Mammary epithelial cell (primary cell): ENCODE measurements at regions of chr4 and their contacts with region 1.

Region 1: DNA sequence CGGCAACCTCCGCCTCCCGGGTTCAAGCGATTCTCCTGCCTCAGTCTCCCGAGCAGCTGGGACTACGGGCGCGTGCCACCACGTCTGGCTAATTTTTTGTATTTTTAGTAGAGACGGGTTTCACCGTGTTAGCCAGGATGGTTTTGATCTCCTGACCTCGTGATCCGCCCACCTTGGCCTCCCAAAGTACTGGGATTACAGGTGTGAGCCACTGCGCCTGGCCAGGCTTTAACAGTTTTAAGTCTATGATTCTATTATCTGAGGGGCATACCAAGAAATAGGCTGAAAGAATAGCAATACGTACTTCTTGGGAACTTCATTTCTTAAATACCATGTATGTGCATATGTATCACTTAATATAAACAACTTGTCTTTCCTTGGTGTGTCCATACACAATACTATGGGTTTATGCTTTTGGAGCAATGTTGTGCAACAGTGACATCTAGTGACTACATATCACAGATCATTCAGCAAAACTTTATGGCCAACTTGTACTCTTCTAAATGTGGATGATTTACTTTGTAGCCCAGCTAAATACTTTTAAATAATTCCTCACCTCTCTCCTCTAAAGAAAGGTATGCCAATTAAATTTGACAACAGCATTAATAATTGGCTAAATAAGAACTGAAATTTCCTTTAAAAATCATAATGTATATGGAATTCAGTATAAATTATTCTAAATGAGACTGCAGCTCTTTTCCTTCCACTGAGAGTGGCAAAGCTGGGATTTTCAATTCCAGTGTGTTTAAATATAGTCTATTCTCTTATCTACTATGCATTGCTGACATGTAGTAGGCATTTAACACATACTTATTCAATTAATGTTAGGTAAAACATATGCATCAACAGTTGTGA is 10.4 kb downstream of the SLC9B1 start:
- DNase-seq: peak; percentile 56
- H3K4me3 ChIP-seq: no peak overlapping the region
- H3K27ac ChIP-seq: no peak overlapping the region
- H3K4me1 ChIP-seq: peaks cover 15% of the 10 kb centered on the region
- H3K27me3 ChIP-seq: no peaks in the 10 kb centered on the region
- CTCF ChIP-seq: peak; percentile 74 to 75

Region 2: GRCh38 chr4:101933906-101934305 is 1075.2 kb before region 1 on chr4:
- CTCF ChIA-PET with region 1: interaction called, 10 read pairs
- dilution Hi-C with region 1: no loop called
- in situ Hi-C with region 1: no loop called
- intact Hi-C with region 1: no loop called
- DNase-seq: no peak
- H3K4me3 ChIP-seq: no peak overlapping the region
- H3K27ac ChIP-seq: no peak overlapping the region
- H3K4me1 ChIP-seq: no peaks in the 10 kb centered on the region
- H3K27me3 ChIP-seq: peaks cover 2% of the 10 kb centered on the region
- CTCF ChIP-seq: no peak

Region 3: DNA sequence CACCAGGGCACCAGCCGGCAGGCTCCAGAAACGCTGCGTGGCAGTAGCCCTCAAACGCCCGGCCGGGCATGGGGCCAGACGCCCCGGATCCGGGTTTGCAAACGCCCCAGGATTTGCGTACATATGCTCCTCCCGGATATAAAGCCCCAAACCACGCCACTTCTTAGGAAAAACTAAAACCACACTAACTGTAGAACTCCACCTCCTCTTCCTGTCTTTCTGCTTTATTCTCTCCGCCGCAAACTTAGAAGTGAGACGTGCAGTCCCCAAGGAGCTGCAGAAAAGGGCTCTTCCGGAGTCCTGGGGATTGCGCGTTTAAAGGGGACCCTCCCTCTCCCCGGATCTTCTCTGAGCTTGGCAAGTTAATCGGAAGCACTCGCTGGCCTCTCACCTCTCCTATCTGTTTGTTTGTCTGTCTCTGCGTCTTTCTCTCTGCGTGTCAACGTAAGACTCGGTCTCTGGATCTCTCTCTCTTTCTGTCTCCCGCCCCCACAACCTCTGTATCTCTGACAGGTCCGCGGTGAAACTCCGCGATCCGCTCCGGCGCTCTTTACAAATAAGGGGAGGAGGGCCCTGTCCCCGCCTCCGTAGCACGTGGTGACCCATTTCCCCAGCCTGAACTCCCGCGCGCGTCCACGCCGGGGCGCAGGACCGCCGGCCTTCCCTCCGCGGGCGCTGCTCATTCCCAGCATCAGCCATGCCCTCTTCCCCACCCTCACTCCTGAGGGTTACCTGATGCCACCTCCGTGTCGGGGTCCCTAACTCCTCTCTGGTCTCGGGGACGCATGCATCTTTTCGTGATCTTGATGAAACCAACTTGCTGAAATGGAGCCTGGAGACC is 663.9 kb before region 1 on chr4 and contains the start of gene SLC39A8:
- CTCF ChIA-PET with region 1: no interaction called
- dilution Hi-C with region 1: no loop called
- in situ Hi-C with region 1: no loop called
- intact Hi-C with region 1: loop called (anchors 5 kb)
- DNase-seq: peak; percentile 80
- H3K4me3 ChIP-seq: peak within 1 kb of the TSS; percentile 76 to 91 (median 76)
- H3K27ac ChIP-seq: peak within 1 kb of the TSS; percentile 76
- H3K4me1 ChIP-seq: peaks cover 26% of the 10 kb centered on the region
- H3K27me3 ChIP-seq: no peaks in the 10 kb centered on the region
- CTCF ChIP-seq: peak; percentile 40 to 86
- total RNA-seq, gene SLC39A8: 8.9 to 12.5 TPM

Region 4: DNA sequence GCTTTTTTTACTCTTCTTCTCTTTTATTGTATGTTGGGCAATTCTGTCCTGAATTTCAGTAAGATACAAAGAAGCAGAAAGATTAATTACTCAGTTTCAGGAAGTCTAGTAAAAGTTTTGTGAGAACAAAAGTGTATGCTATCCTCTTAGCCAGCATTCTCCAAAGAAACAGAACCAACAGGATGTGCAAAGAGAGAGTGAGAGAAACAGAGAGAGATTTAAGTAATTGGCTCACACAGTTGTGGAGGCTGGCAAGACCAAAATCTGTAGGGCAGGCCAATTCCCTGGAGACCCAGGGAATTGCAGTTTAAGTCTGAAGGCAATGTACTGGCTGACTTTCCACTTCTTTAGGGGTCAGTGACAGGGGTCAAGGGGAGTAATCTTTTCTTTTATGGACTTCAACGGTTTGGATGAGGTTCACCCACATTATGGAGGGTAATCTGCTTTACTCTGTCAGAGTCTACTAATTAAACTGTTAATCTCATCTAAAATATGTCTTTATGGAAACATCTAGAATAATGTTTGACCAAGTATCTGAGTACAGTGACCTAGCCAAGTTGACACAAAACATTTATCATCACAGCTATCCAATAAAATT is 604.6 kb before region 1 on chr4:
- CTCF ChIA-PET with region 1: no interaction called
- dilution Hi-C with region 1: no loop called
- in situ Hi-C with region 1: no loop called
- intact Hi-C with region 1: no loop called
- DNase-seq: no peak
- H3K4me3 ChIP-seq: no peak overlapping the region
- H3K27ac ChIP-seq: no peak overlapping the region
- H3K4me1 ChIP-seq: no peaks in the 10 kb centered on the region
- H3K27me3 ChIP-seq: no peaks in the 10 kb centered on the region
- CTCF ChIP-seq: no peak

Region 5: GRCh38 chr4:102439236-102439614 is 569.9 kb before region 1 on chr4:
- CTCF ChIA-PET with region 1: no interaction called
- dilution Hi-C with region 1: no loop called
- in situ Hi-C with region 1: loop called (anchors 10 kb)
- intact Hi-C with region 1: no loop called
- DNase-seq: peak; percentile 92
- H3K4me3 ChIP-seq: no peak overlapping the region
- H3K27ac ChIP-seq: peak overlapping the region; percentile 46
- H3K4me1 ChIP-seq: peaks cover 12% of the 10 kb centered on the region
- H3K27me3 ChIP-seq: no peaks in the 10 kb centered on the region
- CTCF ChIP-seq: no peak

Region 6: DNA sequence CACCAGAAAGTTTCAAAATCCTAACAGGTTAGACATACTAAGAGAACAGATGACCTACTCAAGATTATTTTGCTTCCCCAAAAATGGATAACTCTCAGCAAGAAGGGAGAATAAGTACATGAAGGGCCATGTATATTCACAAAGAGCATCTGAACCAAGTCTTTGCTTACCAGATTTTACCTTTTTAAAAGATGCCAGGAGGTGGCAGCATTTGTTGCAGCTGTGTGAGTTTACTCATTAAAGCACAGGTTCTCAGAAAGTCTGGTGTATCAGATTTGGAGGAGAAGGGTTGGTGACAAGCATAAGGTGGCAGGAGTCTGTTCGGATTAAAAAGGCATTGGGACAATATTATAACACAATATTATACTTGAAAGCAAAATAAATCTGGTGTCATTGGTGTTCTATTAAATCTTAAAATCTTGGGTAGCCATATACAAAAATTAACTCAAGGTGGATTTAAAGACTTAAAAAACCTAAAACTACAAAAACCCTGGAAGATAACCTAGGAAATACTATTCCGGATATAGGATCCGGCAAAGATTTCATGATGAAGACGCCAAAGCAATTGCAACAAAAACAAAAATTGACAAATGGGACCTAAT is 559.2 kb before region 1 on chr4:
- CTCF ChIA-PET with region 1: no interaction called
- dilution Hi-C with region 1: no loop called
- in situ Hi-C with region 1: loop called in 1 of 2 experiments (anchors 10 kb)
- intact Hi-C with region 1: loop called (anchors 1 kb)
- DNase-seq: peak; percentile 51
- H3K4me3 ChIP-seq: no peak overlapping the region
- H3K27ac ChIP-seq: no peak overlapping the region
- H3K4me1 ChIP-seq: no peaks in the 10 kb centered on the region
- H3K27me3 ChIP-seq: no peaks in the 10 kb centered on the region
- CTCF ChIP-seq: peak; percentile 48 to 75

Region 7: GRCh38 chr4:102574317-102574716 is 434.8 kb before region 1 on chr4:
- CTCF ChIA-PET with region 1: no interaction called
- dilution Hi-C with region 1: no loop called
- in situ Hi-C with region 1: no loop called
- intact Hi-C with region 1: no loop called
- DNase-seq: no peak
- H3K4me3 ChIP-seq: no peak overlapping the region
- H3K27ac ChIP-seq: no peak overlapping the region
- H3K4me1 ChIP-seq: peaks cover 8% of the 10 kb centered on the region
- H3K27me3 ChIP-seq: no peaks in the 10 kb centered on the region
- CTCF ChIP-seq: no peak

Region 8: DNA sequence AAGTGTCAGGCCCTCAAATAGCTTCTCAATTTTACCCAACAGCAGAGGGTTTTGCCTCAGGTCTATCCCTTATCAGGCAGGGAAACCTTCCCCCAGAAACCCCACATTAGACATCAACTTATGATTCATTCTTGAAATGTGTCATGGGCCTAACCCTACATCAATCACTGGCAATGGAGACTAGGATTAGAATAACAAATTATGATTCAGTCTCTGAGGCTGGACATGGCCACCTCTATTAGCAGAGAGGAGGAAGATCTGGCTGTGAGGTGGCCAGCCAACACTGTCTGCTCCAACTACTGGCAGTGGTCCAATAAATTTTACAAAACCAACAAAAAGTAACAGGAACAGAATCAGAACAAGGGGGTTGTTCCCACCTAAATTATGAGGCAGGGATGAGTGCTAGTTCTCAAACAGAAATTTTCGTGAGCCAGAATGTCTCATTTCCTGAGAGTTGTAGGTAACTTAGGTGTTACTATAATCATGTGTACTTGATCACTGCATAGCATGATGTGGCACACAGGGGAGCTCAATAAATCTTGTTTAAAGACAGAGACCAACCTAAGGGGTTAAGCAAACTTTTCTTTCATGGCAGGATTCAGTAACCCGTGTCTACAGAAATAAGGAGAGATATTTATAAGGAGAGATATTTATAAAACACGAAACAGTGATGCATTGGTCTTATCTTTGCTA is 381.1 kb before region 1 on chr4:
- CTCF ChIA-PET with region 1: no interaction called
- dilution Hi-C with region 1: loop called (anchors 25 kb)
- in situ Hi-C with region 1: loop called (anchors 5 kb)
- intact Hi-C with region 1: loop called (anchors 1 kb)
- DNase-seq: peak; percentile 97
- H3K4me3 ChIP-seq: no peak overlapping the region
- H3K27ac ChIP-seq: peak overlapping the region; percentile 75
- H3K4me1 ChIP-seq: peaks cover 27% of the 10 kb centered on the region
- H3K27me3 ChIP-seq: no peaks in the 10 kb centered on the region
- CTCF ChIP-seq: no peak

Region 9: DNA sequence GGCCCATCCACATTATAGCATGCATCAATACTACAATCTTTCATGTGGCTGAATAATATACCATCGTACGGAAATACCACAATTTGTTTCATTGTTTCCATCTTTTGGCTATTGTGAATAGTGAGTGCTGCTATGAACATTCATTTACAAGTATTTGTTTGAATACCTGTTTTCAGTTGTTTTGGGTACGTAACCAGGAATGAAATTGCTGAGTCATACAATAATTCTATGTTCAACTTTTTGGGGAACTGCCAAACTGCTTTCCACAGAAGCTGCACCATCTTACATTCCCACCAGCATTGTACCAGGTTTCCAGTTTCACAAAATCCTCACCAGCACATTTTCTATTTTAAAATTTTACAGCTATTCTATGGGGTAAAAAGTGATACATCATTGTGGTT is 219.8 kb before region 1 on chr4:
- CTCF ChIA-PET with region 1: no interaction called
- dilution Hi-C with region 1: no loop called
- in situ Hi-C with region 1: no loop called
- intact Hi-C with region 1: no loop called
- DNase-seq: peak; percentile 64
- H3K4me3 ChIP-seq: no peak overlapping the region
- H3K27ac ChIP-seq: peak overlapping the region; percentile 33
- H3K4me1 ChIP-seq: no peaks in the 10 kb centered on the region
- H3K27me3 ChIP-seq: no peaks in the 10 kb centered on the region
- CTCF ChIP-seq: no peak

Region 10: GRCh38 chr4:103091601-103092223 is 82.6 kb after region 1 on chr4:
- CTCF ChIA-PET with region 1: no interaction called
- dilution Hi-C with region 1: no loop called
- in situ Hi-C with region 1: no loop called
- intact Hi-C with region 1: loop called (anchors 1 kb)
- DNase-seq: peak; percentile 63
- H3K4me3 ChIP-seq: no peak overlapping the region
- H3K27ac ChIP-seq: no peak overlapping the region
- H3K4me1 ChIP-seq: peaks cover 4% of the 10 kb centered on the region
- H3K27me3 ChIP-seq: no peaks in the 10 kb centered on the region
- CTCF ChIP-seq: peak; percentile 52 to 66

Region 11: GRCh38 chr4:103264905-103265304 is 255.8 kb after region 1 on chr4:
- CTCF ChIA-PET with region 1: no interaction called
- dilution Hi-C with region 1: no loop called
- in situ Hi-C with region 1: no loop called
- intact Hi-C with region 1: no loop called
- DNase-seq: no peak
- H3K4me3 ChIP-seq: no peak overlapping the region
- H3K27ac ChIP-seq: no peak overlapping the region
- H3K4me1 ChIP-seq: no peaks in the 10 kb centered on the region
- H3K27me3 ChIP-seq: no peaks in the 10 kb centered on the region
- CTCF ChIP-seq: no peak